ENCODE measurements at regions of chr20 and their contacts with region 1.

Region 1: DNA sequence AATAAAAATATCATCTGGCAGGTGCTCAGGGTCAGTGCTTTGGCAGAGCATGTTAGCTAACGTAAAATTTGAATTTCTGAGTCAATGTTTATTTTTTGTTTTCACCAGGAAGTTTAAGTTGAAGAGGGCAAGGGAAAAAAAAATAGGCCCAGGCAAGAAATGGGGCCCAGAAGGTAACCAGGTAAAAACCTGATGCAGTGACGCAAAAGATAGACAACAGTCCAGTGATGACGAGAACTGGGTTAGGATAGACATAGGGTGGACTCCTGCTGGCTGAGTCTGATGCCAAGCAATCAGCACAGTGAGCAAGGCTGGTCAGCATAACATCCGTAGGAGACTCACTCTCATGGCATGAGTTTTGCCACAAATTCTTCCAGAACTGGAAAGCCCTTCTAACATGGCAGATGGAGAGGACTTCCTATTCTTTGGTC is 42.2 kb downstream of the ZHX3 start:
- DNase-seq: no peak
- ATAC-seq: no peak
- H3K4me3 ChIP-seq: no peak overlapping the region
- H3K27ac ChIP-seq: peak overlapping the region in 9 of 12 donors; percentile 43 to 80 (median 66)
- H3K4me1 ChIP-seq: peaks cover 6 to 66% (median 34%) of the 10 kb centered on the region in 12 donors
- H3K27me3 ChIP-seq: no peaks in the 10 kb centered on the region
- CTCF ChIP-seq: no peak
- POLR2A ChIP-seq: no peak

Region 2: DNA sequence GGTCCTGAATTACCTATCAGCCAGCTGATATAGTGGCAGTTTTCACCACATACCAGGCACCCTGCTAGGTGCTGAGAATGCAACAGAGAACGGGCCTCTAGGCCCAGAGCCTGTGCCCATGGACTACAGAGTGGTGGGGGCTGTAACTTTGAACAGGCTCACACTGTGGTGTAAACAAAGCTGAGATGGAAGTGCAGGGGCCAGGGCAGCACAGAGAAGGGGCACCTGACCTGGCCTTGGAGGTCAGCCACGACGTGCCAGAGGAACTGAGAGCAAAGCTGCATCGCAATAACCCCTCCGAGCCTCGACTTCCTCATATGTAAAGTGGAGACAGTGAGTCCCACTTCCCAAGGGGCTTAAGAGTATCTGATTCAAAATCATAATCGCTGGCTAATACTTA is 692.1 kb before region 1 on chr20:
- intact Hi-C with region 1: no loop called
- DNase-seq: peak in 3 of 5 donors; percentile 21 to 57 (median 23)
- ATAC-seq: peak in 3 of 4 donors; percentile 25 to 57 (median 25)
- H3K4me3 ChIP-seq: no peak overlapping the region
- H3K27ac ChIP-seq: peak overlapping the region in 1 of 12 donors; percentile 34
- H3K4me1 ChIP-seq: peaks cover 0 to 29% (median 0%) of the 10 kb centered on the region in 12 donors
- H3K27me3 ChIP-seq: peaks cover 0 to 8% (median 0%) of the 10 kb centered on the region in 9 donors
- CTCF ChIP-seq: no peak
- POLR2A ChIP-seq: no peak

Region 3: DNA sequence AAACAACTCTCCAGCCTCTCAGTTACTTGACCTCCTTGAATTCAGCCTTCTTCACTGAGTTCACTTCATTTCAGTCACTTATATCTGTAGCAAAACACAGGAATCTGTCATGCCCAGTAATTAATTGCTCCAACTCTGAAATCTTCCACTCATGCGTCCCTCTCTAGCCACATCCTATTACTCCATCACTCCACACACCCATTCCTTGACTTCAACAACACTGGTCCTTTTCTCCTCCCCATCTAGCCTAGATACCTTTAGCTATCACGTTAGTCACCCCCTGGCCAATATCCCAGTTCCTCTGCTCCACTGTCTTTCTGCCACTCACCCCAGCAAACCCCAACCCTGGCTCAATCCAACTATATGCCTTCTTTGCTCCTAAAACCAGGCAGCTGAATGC is 34.5 kb after region 1 on chr20:
- intact Hi-C with region 1: loop called in 3 of 10 experiments (anchors 5 kb)
- DNase-seq: no peak
- ATAC-seq: peak in 1 of 4 donors; percentile 25
- H3K4me3 ChIP-seq: no peak overlapping the region
- H3K27ac ChIP-seq: peak overlapping the region in 4 of 12 donors; percentile 47 to 61 (median 48)
- H3K4me1 ChIP-seq: peaks cover 4 to 51% (median 33%) of the 10 kb centered on the region in 12 donors
- H3K27me3 ChIP-seq: no peaks in the 10 kb centered on the region
- CTCF ChIP-seq: no peak
- POLR2A ChIP-seq: no peak

Measured in heart left ventricle (tissue), 16 donors.